ENCODE measurements at regions of chr2 and their contacts with region 1.

Region 1: DNA sequence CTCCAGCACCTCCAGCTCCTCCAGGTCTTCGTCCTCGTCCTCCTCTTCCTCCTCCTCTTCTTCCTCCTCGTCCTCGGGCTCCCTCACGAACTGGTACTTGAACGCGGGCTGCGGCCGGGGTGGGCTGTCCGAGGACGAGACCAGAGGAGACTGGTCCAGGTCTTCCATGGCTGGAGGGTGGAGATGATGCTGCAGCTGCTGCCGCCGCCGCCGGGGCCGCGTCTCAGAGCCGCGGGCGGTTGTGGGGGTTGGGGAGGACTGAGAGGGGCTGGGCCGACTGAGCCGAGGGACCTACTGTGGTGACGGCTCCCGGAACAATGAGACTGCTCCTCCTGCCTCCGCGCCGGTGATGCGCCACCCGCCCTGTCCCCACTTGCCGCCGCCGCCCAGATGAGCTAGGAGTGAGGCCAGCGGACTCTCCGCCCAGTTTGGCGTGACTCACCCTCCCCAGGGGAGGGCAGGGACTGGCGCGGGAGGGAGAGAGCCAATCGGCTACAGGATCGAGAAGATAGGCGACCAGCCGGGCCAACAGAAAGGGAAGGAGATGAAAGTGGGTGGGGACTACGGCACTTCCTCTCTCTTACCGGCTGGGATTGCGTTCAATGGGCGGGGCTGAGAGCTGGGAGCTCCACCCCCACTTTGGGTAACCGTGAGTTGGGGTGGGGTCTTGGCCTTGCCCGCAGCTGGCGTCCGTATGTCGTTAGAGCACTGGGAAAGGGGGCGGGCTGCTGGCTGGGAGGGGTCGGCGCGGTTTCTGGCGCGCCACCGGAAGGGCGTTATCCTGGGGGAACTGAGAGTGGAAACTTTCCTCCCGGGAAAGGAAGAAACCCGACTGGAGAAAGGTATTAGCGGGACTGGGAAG is at the start of gene RTN4:
- DNase-seq: peak; percentile 94 to 99 (median 98)
- ATAC-seq: peak; percentile 89
- H3K4me3 ChIP-seq: peak within 1 kb of the TSS; percentile 90
- H3K4me3 Mint-ChIP-seq: peak within 1 kb of the TSS; percentile 99
- H3K27ac ChIP-seq: peak within 1 kb of the TSS; percentile 83 to 90
- H3K27ac Mint-ChIP-seq: peak within 1 kb of the TSS; percentile 97
- H3K4me1 ChIP-seq: peaks cover 30% of the 10 kb centered on the region
- H3K4me1 Mint-ChIP-seq: peaks cover 81% of the 10 kb centered on the region
- H3K27me3 ChIP-seq: no peaks in the 10 kb centered on the region
- H3K27me3 Mint-ChIP-seq: no peaks in the 10 kb centered on the region
- CTCF ChIP-seq: no peak
- total RNA-seq, gene RTN4: 84.9 to 85.7 TPM

Region 2: GRCh38 chr2:54966165-54966832 is 84.1 kb before region 1 on chr2:
- CTCF ChIA-PET with region 1: no interaction called
- POLR2A ChIA-PET with region 1: no interaction called
- intact Hi-C with region 1: no loop called
- DNase-seq: peak in 1 of 14 experiments; percentile 41
- ATAC-seq: peak; percentile 60
- H3K4me3 ChIP-seq: no peak overlapping the region
- H3K4me3 Mint-ChIP-seq: peak overlapping the region; percentile 4
- H3K27ac ChIP-seq: no peak overlapping the region
- H3K27ac Mint-ChIP-seq: peak overlapping the region; percentile 55
- H3K4me1 ChIP-seq: peaks cover 37% of the 10 kb centered on the region
- H3K4me1 Mint-ChIP-seq: peaks cover 32% of the 10 kb centered on the region
- H3K27me3 ChIP-seq: no peaks in the 10 kb centered on the region
- H3K27me3 Mint-ChIP-seq: no peaks in the 10 kb centered on the region
- CTCF ChIP-seq: no peak

Region 3: GRCh38 chr2:55010149-55010591 is 40.2 kb before region 1 on chr2:
- CTCF ChIA-PET with region 1: interaction called, 24 read pairs
- POLR2A ChIA-PET with region 1: interaction called, 13 read pairs
- intact Hi-C with region 1: loop called (anchors 2 kb)
- DNase-seq: peak; percentile 22 to 81 (median 38)
- ATAC-seq: peak; percentile 94
- H3K4me3 ChIP-seq: peak overlapping the region; percentile 54
- H3K4me3 Mint-ChIP-seq: peak overlapping the region; percentile 92
- H3K27ac ChIP-seq: peak overlapping the region; percentile 25 to 36
- H3K27ac Mint-ChIP-seq: peak overlapping the region; percentile 87
- H3K4me1 ChIP-seq: peaks cover 9% of the 10 kb centered on the region
- H3K4me1 Mint-ChIP-seq: peaks cover 76% of the 10 kb centered on the region
- H3K27me3 ChIP-seq: no peaks in the 10 kb centered on the region
- H3K27me3 Mint-ChIP-seq: no peaks in the 10 kb centered on the region
- CTCF ChIP-seq: no peak

Region 4: DNA sequence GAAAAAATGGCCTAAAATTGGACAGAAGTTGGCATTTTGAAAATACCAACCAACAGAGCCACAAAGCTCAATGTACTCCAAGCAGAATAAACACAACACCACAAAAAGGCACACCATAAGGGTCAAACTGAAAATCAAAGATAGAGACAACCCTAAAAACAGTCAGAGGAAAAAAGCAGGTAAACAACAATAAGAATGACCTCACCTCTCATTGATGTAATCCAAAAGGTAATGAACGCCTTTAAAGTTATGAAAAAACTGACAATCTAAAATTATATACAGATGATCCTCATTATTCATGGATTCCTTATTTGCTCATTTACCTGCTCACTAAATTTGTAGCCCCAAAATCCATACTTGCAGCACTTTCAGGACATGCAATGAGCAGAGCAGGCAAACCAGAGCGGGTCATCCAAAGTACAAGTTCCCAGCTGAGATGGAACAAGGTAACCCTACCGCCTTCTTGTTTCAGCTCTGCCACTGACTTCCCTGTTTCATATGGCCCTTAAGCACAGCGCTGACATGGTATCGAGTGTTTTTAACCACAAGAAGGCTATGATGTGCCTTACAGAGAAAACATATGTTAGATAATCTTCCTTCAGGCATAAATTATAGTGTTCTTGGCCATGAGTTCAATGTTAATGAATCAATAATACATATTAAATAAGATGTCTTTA is 17.2 kb before region 1 on chr2:
- CTCF ChIA-PET with region 1: interaction called, 5 read pairs
- POLR2A ChIA-PET with region 1: interaction called, 28 read pairs
- intact Hi-C with region 1: loop called (anchors 2 kb)
- DNase-seq: peak in 3 of 14 experiments; percentile 24 to 52 (median 52)
- ATAC-seq: peak; percentile 94
- H3K4me3 ChIP-seq: no peak overlapping the region
- H3K4me3 Mint-ChIP-seq: peak overlapping the region; percentile 2
- H3K27ac ChIP-seq: no peak overlapping the region
- H3K27ac Mint-ChIP-seq: peak overlapping the region; percentile 67
- H3K4me1 ChIP-seq: peaks cover 15% of the 10 kb centered on the region
- H3K4me1 Mint-ChIP-seq: peaks cover 67% of the 10 kb centered on the region
- H3K27me3 ChIP-seq: no peaks in the 10 kb centered on the region
- H3K27me3 Mint-ChIP-seq: no peaks in the 10 kb centered on the region
- CTCF ChIP-seq: no peak

Region 5: DNA sequence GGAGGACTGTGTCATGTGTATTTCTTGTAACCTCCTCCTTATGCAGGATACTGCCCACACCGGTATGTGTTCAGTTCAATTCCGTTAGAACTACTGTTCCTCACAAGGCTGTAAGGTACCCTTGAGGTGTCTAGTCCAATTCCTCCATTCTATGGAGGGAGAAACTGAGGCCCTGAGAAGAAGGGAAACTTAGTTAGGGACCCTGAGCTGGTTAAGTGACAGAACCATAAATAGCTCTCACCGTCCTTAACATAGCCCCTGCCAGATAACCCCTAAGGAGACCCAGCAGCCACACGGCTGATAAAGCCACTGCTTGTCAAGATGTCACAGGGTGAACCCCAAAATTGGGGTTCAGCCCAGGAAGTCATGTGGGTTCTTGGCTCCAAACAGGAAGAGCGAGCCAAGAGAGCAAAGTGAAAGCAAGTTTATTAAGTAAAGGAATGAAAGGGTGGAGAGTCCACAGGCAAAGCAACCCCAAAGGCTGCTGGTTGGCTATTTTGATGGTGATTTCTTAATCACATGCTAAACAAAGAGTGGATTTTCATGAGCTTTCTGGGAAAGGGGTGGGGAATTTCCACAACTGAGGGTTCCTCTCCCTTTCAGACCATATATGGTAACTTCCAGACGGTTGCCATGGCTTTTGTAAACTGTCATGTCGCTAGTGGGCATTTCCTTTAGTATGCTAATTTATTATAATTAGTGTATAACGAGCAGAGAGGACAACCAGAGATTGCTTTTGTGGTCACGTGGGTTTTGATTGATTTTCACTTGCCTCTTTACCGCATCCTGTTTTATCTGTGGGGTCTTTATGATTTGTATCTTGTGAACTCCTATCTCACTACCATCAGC is 83.3 kb after region 1 on chr2:
- CTCF ChIA-PET with region 1: interaction called, 4 read pairs
- POLR2A ChIA-PET with region 1: interaction called, 22 read pairs
- intact Hi-C with region 1: loop called (anchors 2 to 5 kb)
- DNase-seq: peak in 13 of 14 experiments; percentile 10 to 93 (median 37)
- ATAC-seq: peak; percentile 92
- H3K4me3 ChIP-seq: peak overlapping the region; percentile 54
- H3K4me3 Mint-ChIP-seq: peak overlapping the region; percentile 91
- H3K27ac ChIP-seq: peak overlapping the region; percentile 80 to 95
- H3K27ac Mint-ChIP-seq: peak overlapping the region; percentile 94
- H3K4me1 ChIP-seq: peaks cover 28% of the 10 kb centered on the region
- H3K4me1 Mint-ChIP-seq: peaks cover 33% of the 10 kb centered on the region
- H3K27me3 ChIP-seq: no peaks in the 10 kb centered on the region
- H3K27me3 Mint-ChIP-seq: no peaks in the 10 kb centered on the region
- CTCF ChIP-seq: no peak

Region 6: DNA sequence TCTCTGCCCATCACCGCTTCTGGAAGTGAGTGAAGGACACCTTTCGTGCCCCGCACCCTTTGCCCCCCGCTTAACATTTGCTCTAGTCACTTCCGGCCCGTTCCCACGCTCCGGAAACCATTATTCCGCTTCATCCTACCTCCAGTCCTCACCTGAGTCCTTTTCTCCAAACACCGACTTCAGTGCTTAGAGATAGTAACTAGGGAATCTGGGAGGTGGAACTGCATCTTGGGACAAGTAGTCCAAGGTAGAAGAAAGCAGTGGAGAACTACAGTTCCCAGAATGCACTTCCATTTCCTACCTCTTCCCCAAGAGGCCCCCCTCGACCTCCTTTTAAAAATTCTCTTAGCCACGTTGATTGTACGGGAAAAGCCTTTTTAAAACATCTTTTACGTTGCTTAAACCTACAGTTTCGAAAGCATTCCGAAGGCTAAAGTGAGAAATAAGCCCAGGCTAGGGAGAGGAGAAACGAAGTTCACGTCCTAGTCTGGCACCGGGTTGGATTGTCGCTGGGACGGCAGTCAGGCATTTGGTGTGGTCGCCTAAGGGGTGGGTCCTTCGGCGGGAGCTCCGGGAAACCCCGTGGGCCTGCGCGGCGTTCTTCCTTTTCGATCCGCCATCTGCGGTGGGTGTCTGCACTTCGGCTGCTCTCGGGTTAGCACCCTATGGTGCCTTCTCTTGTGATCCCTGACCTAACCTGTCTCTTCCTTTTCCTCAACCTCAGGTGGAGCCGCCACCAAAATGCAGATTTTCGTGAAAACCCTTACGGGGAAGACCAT is 181.9 kb after region 1 on chr2 and contains the starts of genes CLHC1 and RPS27A:
- CTCF ChIA-PET with region 1: no interaction called
- POLR2A ChIA-PET with region 1: interaction called, 21 read pairs
- intact Hi-C with region 1: loop called (anchors 2 to 5 kb)
- DNase-seq: peak; percentile 90 to 96 (median 94)
- ATAC-seq: peak; percentile 87
- H3K4me3 ChIP-seq: peak within 1 kb of the TSS; percentile 77
- H3K4me3 Mint-ChIP-seq: peak within 1 kb of the TSS; percentile 95
- H3K27ac ChIP-seq: peak within 1 kb of the TSS; percentile 97 to 100
- H3K27ac Mint-ChIP-seq: peak within 1 kb of the TSS; percentile 92
- H3K4me1 ChIP-seq: peaks cover 31% of the 10 kb centered on the region
- H3K4me1 Mint-ChIP-seq: peaks cover 81% of the 10 kb centered on the region
- H3K27me3 ChIP-seq: no peaks in the 10 kb centered on the region
- H3K27me3 Mint-ChIP-seq: no peaks in the 10 kb centered on the region
- CTCF ChIP-seq: no peak
- total RNA-seq, gene CLHC1: 4.4 TPM
- total RNA-seq, gene RPS27A: 2,201 to 2,315 TPM

Region 7: DNA sequence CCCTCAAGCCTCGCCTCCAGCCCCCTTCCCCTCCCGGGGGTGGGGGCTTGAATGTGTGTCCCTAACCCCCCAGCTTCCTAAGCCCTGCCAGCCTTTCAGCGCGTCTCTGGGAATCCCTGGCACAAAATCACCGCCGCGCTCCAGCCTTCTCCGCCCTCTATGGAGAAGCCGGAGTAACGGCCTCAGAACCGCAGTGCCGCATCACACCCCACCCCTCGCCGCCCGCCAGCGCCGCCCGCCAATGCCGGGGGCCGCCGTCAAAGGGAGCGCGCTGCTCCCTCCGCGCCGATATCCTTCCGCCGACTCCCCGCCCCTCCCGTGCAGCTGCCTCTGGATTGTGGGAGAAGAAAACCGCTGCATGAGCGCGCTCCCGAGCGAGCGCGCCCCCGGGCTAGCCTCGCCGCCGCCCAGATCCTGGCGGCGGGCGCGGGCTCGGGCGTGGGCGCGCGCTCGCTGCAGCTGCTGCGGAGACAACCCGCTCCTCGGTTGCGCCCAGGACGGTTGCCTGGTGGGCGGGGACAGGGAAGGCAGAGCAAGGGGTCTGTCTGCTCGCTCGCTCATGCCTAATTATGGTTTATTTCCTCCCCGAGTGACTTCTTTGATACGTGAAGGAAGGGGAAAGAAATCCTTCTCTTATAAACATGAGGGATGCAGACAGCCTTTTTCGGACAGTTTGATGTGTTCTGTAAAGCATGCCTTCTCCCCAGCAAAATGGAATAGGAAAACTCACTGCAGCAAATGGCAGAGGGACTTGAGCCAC is 369.5 kb after region 1 on chr2 and contains the start of gene CCDC88A:
- CTCF ChIA-PET with region 1: no interaction called
- POLR2A ChIA-PET with region 1: interaction called, 3 read pairs
- intact Hi-C with region 1: loop called in 1 of 2 experiments (anchors 10 kb)
- DNase-seq: peak; percentile 76 to 96 (median 84)
- ATAC-seq: peak; percentile 76
- H3K4me3 ChIP-seq: peak within 1 kb of the TSS; percentile 94
- H3K4me3 Mint-ChIP-seq: peak within 1 kb of the TSS; percentile 95
- H3K27ac ChIP-seq: peak within 1 kb of the TSS; percentile 56 to 81
- H3K27ac Mint-ChIP-seq: peak within 1 kb of the TSS; percentile 79
- H3K4me1 ChIP-seq: peaks cover 12% of the 10 kb centered on the region
- H3K4me1 Mint-ChIP-seq: peaks cover 44% of the 10 kb centered on the region
- H3K27me3 ChIP-seq: no peaks in the 10 kb centered on the region
- H3K27me3 Mint-ChIP-seq: no peaks in the 10 kb centered on the region
- CTCF ChIP-seq: no peak
- total RNA-seq, gene CCDC88A: 11.0 to 12.9 TPM